ENCODE measurements at regions of chr5 and their contacts with region 1.

Region 1: GRCh38 chr5:142881076-142881783 is 111.1 kb downstream of the ARHGAP26 start:
- DNase-seq: no peak
- H3K4me3 Mint-ChIP-seq: no peak overlapping the region
- H3K27ac Mint-ChIP-seq: no peak overlapping the region
- H3K4me1 Mint-ChIP-seq: peaks cover 19% of the 10 kb centered on the region
- H3K27me3 Mint-ChIP-seq: no peaks in the 10 kb centered on the region
- CTCF ChIP-seq: no peak

Region 2: DNA sequence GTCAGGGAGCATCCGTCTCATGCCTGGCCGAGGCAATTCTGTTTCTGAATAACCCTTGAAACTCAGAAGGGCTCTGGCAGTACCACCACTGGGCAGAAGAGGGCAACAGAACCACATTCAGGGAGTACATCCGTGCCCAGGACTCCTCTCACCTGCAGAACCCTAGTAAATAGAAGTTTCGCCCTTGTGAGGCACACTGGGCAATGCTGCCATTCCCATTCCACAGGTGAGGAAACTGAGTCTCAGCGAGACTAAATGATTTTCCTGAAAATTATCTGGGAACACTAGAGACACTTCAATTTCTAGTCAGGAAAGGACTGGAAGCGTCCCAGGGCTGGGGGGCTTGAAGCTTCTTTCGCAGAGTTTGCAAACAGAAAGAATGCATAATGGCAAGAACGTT is 270.1 kb before region 1 on chr5:
- CTCF ChIA-PET with region 1: interaction called, 13 read pairs
- POLR2A ChIA-PET with region 1: interaction called, 4 read pairs
- intact Hi-C with region 1: loop called (anchors 5 kb)
- DNase-seq: peak; percentile 85
- H3K4me3 Mint-ChIP-seq: no peak overlapping the region
- H3K27ac Mint-ChIP-seq: peak overlapping the region; percentile 29
- H3K4me1 Mint-ChIP-seq: peaks cover 5% of the 10 kb centered on the region
- H3K27me3 Mint-ChIP-seq: no peaks in the 10 kb centered on the region
- CTCF ChIP-seq: peak; percentile 99

Region 3: GRCh38 chr5:142720641-142721271 is 160.5 kb before region 1 on chr5:
- CTCF ChIA-PET with region 1: interaction called, 1,942 read pairs
- POLR2A ChIA-PET with region 1: interaction called, 31 read pairs
- intact Hi-C with region 1: loop called (anchors 1 kb)
- DNase-seq: peak; percentile 95
- H3K4me3 Mint-ChIP-seq: peak overlapping the region; percentile 27
- H3K27ac Mint-ChIP-seq: peak overlapping the region; percentile 74
- H3K4me1 Mint-ChIP-seq: peaks cover 46% of the 10 kb centered on the region
- H3K27me3 Mint-ChIP-seq: no peaks in the 10 kb centered on the region
- CTCF ChIP-seq: peak; percentile 24

Region 4: GRCh38 chr5:142769741-142770631 is 111.2 kb before region 1 on chr5 and contains the start of gene ARHGAP26:
- CTCF ChIA-PET with region 1: interaction called, 66 read pairs
- POLR2A ChIA-PET with region 1: interaction called, 18 read pairs
- intact Hi-C with region 1: no loop called
- DNase-seq: peak; percentile 99
- H3K4me3 Mint-ChIP-seq: peak within 1 kb of the TSS; percentile 95
- H3K27ac Mint-ChIP-seq: peak within 1 kb of the TSS; percentile 33
- H3K4me1 Mint-ChIP-seq: peaks cover 21% of the 10 kb centered on the region
- H3K27me3 Mint-ChIP-seq: no peaks in the 10 kb centered on the region
- CTCF ChIP-seq: peak; percentile 30
- total RNA-seq, gene ARHGAP26: 54.3 and 58.9 TPM in 2 replicates

Region 5: GRCh38 chr5:142826741-142827732 is 54.2 kb before region 1 on chr5:
- CTCF ChIA-PET with region 1: interaction called, 11 read pairs
- POLR2A ChIA-PET with region 1: no interaction called
- intact Hi-C with region 1: no loop called
- DNase-seq: peak; percentile 83
- H3K4me3 Mint-ChIP-seq: peak overlapping the region; percentile 35
- H3K27ac Mint-ChIP-seq: peak overlapping the region; percentile 73
- H3K4me1 Mint-ChIP-seq: peaks cover 57% of the 10 kb centered on the region
- H3K27me3 Mint-ChIP-seq: no peaks in the 10 kb centered on the region
- CTCF ChIP-seq: no peak

Region 6: DNA sequence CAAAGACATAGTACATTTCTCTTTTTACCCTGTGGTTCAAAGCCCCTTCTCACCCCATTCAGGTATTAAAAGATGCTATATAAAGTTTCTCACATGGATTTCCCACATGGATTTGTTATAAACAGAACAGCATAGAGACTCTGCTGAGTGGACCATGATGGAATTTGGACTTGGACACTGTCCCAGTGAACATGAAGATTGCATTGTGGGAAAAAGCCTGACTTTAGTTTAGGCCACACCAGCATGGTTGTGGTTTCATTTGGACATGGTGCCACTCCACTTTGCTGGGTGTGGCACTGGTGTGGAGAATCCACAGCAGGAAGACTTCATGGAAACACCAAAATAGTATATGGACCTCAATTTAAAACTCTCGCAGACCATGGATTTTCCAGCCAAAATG is 13.5 kb after region 1 on chr5:
- CTCF ChIA-PET with region 1: interaction called, 106 read pairs
- POLR2A ChIA-PET with region 1: interaction called, 3 read pairs
- intact Hi-C with region 1: no loop called
- DNase-seq: peak; percentile 31
- H3K4me3 Mint-ChIP-seq: no peak overlapping the region
- H3K27ac Mint-ChIP-seq: no peak overlapping the region
- H3K4me1 Mint-ChIP-seq: peaks cover 19% of the 10 kb centered on the region
- H3K27me3 Mint-ChIP-seq: no peaks in the 10 kb centered on the region
- CTCF ChIP-seq: no peak

Region 7: DNA sequence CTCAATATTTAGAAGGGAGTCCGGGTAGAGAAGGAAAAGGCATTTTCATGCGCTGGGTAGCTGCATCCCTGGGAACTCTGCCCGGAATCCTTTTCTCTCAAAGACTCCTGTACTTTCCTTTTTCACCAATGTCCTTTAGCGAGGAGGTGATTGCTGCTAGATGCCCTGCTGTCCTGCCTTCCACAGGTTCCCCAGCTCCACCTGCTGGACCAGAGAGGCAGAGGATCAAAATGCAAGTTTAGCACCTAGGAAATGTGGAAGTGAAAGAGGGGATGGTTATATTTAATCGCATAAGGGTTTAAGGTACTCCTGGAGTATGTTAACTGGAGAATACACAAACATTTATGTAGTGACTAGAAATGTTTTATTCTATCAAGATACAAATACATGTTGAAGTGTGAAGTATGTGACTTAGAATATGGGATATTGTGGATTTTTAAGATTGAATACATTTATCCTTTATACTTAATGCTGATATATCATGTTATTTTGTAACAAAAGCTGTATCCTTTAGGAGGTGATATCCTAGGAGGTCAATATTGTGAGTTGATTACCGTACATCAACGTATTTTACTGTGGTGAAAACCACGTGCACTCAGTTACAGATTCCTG is 34.7 kb after region 1 on chr5:
- CTCF ChIA-PET with region 1: interaction called, 122 read pairs
- POLR2A ChIA-PET with region 1: no interaction called
- intact Hi-C with region 1: no loop called
- DNase-seq: peak; percentile 78
- H3K4me3 Mint-ChIP-seq: no peak overlapping the region
- H3K27ac Mint-ChIP-seq: no peak overlapping the region
- H3K4me1 Mint-ChIP-seq: peaks cover 7% of the 10 kb centered on the region
- H3K27me3 Mint-ChIP-seq: no peaks in the 10 kb centered on the region
- CTCF ChIP-seq: peak; percentile 79

Region 8: DNA sequence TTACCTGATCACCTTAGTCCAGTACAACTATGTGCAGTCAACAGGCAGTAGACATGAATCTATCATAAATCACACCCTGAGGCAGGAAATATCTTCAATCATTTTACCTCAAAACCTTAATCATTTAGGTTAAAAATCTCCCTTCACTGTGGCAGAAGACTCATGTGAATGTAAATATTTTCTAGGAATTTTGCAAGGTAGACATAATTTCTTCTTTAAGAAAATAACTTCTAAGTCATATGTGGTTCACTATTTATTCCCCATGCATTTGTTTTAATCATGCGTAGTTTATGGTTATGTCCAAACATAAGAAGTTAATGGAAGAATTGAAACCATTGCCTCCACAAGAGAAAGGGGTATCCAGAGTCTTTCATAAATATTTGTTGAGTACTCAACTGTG is 1027.7 kb after region 1 on chr5:
- CTCF ChIA-PET with region 1: no interaction called
- POLR2A ChIA-PET with region 1: no interaction called
- intact Hi-C with region 1: no loop called
- DNase-seq: no peak
- H3K4me3 Mint-ChIP-seq: no peak overlapping the region
- H3K27ac Mint-ChIP-seq: no peak overlapping the region
- H3K4me1 Mint-ChIP-seq: peaks cover 8% of the 10 kb centered on the region
- H3K27me3 Mint-ChIP-seq: no peaks in the 10 kb centered on the region
- CTCF ChIP-seq: no peak